ENCODE measurements at regions of chr4 and their contacts with region 1.

Region 1: DNA sequence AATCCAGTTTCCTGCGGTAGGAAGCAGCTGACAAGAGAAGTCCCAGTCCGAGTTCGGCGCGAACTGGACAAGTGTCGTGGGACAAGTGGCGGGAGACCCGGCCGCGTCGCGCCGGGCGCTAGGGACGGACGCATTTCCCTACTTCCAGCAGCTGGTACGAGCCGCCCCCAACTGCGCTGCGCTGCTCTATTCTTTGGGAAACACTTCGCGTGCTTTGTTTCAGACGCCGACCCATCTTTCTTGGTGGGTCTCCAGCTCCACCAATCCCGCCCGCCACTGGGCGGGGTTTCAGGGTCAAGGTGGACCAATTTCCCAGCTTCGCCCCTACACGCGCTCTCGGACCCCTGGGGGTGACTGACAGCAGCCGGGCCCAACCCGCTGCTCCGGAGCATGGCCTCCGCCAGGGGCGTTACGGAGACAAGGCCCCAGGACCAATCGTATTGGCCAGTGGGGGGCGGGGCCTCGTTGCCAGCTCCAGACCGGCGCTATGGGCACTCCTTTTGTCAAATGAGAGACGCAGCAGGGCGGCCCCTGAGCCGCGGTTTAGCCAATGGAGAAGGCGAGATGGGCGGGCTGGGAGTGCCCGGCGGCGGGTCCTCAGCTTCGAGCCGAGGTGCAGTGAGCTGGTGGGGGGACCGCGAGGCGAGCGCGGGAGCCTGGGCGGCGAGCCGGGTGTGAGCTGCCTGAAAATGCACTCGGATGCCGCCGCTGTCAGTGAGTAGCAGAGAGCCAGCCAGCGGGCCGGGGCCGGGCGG is at the start of gene DCUN1D4:
- DNase-seq: peak; percentile 100
- total RNA-seq, gene DCUN1D4: 55.0 to 68.3 TPM

Region 2: GRCh38 chr4:51830146-51830720 is 12.5 kb before region 1 on chr4:
- intact Hi-C with region 1: loop called in 1 of 2 experiments (anchors 1 kb)
- DNase-seq: no peak

Region 3: DNA sequence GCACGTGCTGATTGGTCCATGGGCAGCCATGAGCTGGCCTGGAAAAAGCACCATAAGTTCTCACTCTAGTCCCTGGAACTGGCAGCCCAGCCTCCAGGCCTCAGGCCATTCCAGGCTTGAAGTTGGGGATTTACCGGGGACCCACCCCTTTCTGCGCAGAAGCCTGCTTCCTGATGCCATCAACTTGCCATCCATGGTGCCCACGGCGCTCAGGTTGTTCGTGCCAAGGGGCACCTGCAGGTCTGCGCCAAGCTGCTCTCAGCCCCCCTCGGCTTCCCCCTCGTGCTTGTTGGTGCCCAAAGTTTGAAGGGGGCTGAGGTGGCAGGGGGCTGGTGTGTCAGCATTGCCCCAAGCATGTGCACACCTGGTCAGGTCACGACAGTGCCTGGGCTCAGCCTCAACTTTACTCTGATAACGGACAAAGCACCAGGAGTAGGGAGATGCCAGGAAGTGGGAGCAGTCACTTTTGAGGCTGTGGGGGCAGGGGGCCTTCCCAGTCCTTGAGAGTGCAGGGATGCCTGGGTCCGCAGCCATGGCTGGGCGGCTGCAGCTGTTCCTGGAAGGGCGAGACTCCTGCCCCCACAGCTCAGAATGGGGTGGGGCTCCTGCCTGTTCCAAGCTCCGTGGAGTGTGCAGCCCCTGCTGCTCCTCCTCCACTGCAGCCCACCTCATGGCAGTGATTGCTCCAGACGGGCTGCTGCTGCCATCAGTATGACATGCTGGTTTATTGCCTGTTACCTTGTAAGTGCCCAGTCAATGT is 25.1 kb after region 1 on chr4:
- intact Hi-C with region 1: loop called in 1 of 2 experiments (anchors 2 kb)
- DNase-seq: no peak

Measured in posterior vena cava (tissue), 2 donors.